ENCODE measurements at regions of chr5 and their contacts with region 1.

Region 1: DNA sequence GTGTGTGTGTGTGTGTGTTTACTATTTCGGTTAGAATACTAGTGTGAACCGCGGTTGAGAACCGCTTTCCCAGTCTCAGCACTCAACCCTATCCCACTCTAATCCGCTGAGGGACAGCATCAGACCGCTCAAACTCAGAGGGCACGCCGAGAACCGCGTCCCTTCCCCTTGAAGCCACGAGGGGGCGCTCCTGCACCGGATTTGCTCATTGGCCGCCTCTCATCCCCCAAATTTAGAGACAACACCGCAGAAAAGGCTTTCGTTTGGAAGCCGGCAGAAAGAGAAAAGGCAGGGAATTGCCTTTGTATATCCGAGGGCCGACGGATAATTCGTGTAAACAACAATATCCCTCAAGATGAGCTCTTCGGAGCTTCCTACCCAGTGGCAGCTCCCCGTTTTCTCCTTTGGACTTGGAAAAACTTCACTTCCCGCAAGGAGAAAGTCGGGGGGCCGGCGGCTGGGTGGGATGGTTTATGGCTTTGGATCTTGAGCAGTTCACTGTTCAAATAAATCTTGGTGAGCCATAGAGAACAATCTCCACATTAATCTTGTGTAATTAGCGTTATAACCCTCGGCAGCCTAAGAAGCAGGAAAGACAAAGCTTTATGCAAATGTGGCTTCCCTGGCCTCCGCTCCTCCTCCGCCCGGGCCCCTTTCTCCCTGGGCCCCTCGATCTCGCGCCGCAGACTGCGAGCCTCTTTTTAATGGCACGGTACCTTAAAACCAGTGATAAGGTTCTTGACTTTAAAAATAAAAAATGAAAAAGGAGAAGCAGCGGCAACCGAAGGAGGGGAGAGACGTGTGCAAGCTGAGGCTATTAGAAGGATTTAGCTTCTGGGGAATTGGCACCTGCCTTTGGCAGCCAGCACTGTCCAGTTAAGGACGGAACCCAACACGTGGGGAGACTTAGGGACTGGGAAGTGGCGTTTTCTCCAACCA is 296.8 kb downstream of the PARP8 start:
- H3K4me3 Mint-ChIP-seq: peak overlapping the region; percentile 72
- H3K27ac Mint-ChIP-seq: no peak overlapping the region
- H3K4me1 Mint-ChIP-seq: peaks cover 45% of the 10 kb centered on the region
- H3K27me3 Mint-ChIP-seq: peaks cover 66% of the 10 kb centered on the region

Region 2: GRCh38 chr5:51001227-51001923 is 38.2 kb after region 1 on chr5:
- intact Hi-C with region 1: no loop called
- H3K4me3 Mint-ChIP-seq: no peak overlapping the region
- H3K27ac Mint-ChIP-seq: no peak overlapping the region
- H3K4me1 Mint-ChIP-seq: no peaks in the 10 kb centered on the region
- H3K27me3 Mint-ChIP-seq: no peaks in the 10 kb centered on the region

Region 3: GRCh38 chr5:52007230-52007858 is 1044.1 kb after region 1 on chr5:
- intact Hi-C with region 1: loop called (anchors 10 kb)
- H3K4me3 Mint-ChIP-seq: no peak overlapping the region
- H3K27ac Mint-ChIP-seq: no peak overlapping the region
- H3K4me1 Mint-ChIP-seq: no peaks in the 10 kb centered on the region
- H3K27me3 Mint-ChIP-seq: no peaks in the 10 kb centered on the region

Region 4: GRCh38 chr5:52657247-52657645 is 1694.0 kb after region 1 on chr5:
- intact Hi-C with region 1: loop called (anchors 2 kb)
- H3K4me3 Mint-ChIP-seq: no peak overlapping the region
- H3K27ac Mint-ChIP-seq: no peak overlapping the region
- H3K4me1 Mint-ChIP-seq: no peaks in the 10 kb centered on the region
- H3K27me3 Mint-ChIP-seq: peaks cover 5% of the 10 kb centered on the region

Measured in dendritic cell treated with granulocyte-macrophage colony-stimulating factor and Interleukin-4, amounts not matched to agents 40 ng/mL and 50 ng/mL, for 4 days (primary cell).